Activated B cell treated with CpG ODN at 0.5 μM for 24 hours (primary cell): ENCODE measurements at regions of chr20 and their contacts with region 1.

Region 1: GRCh38 chr20:2873010-2873746 is at the start of gene PTPRA:
- DNase-seq: peak; percentile 90
- ATAC-seq: peak; percentile 94
- H3K4me3 Mint-ChIP-seq: peak within 1 kb of the TSS; percentile 94
- H3K27ac Mint-ChIP-seq: peak within 1 kb of the TSS; percentile 80
- H3K4me1 Mint-ChIP-seq: peaks cover 38% of the 10 kb centered on the region
- H3K27me3 Mint-ChIP-seq: peaks cover 4% of the 10 kb centered on the region
- CTCF ChIP-seq: no peak
- total RNA-seq, gene PTPRA: 43.6 and 46.7 TPM in 2 replicates

Region 2: DNA sequence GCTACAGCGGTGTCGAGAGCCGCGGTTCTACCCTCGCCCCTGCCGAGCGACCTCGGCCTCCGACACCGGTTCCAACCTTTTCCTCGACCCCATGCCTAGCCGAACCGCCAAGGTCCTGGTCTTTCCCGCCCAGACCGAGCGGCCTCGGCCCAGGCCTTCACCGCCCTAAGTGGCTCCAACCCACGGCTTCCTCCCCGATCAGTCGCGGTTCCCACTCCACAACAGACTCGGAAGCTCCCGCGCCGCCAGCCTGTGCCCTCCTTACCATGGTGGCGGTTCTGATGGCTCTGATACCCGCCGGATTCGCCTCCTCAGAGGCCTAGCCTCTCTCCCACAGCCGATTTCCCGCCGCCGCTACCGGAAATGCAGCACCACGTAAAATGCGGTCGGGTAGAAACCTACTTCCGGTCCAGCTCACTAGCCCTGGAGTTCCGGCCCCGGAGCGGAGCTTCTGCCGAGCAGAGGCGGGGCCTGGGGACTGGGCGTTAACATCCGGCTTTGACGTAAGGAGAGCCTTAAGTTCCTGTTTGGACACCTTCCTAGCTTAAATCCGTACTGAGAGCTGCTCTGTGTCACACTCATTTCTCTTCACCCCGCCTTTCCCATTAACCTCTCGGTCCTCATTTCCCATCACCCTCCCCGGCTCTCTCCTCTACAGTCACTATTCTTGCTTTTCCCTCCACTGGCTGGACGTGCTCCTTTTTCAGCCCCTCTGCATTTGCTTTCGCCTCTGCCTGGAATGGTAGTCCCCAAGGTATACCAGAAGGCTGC is 402.6 kb before region 1 on chr20 and contains the start of gene SNRPB:
- CTCF ChIA-PET with region 1: no interaction called
- POLR2A ChIA-PET with region 1: no interaction called
- intact Hi-C with region 1: loop called (anchors 1 kb)
- DNase-seq: peak; percentile 95
- ATAC-seq: peak; percentile 94
- H3K4me3 Mint-ChIP-seq: peak within 1 kb of the TSS; percentile 99
- H3K27ac Mint-ChIP-seq: peak within 1 kb of the TSS; percentile 97
- H3K4me1 Mint-ChIP-seq: peaks cover 50% of the 10 kb centered on the region
- H3K27me3 Mint-ChIP-seq: no peaks in the 10 kb centered on the region
- CTCF ChIP-seq: no peak
- total RNA-seq, gene SNRPB: 215 and 234 TPM in 2 replicates

Region 3: GRCh38 chr20:2688041-2688591 is 185.1 kb before region 1 on chr20:
- CTCF ChIA-PET with region 1: no interaction called
- POLR2A ChIA-PET with region 1: no interaction called
- intact Hi-C with region 1: loop called (anchors 5 kb)
- DNase-seq: no peak
- ATAC-seq: peak; percentile 16
- H3K4me3 Mint-ChIP-seq: no peak overlapping the region
- H3K27ac Mint-ChIP-seq: no peak overlapping the region
- H3K4me1 Mint-ChIP-seq: peaks cover 13% of the 10 kb centered on the region
- H3K27me3 Mint-ChIP-seq: peaks cover 46% of the 10 kb centered on the region
- CTCF ChIP-seq: no peak

Region 4: GRCh38 chr20:2888224-2888955 is 15.2 kb after region 1 on chr20:
- CTCF ChIA-PET with region 1: no interaction called
- POLR2A ChIA-PET with region 1: interaction called, 3 read pairs
- intact Hi-C with region 1: loop called (anchors 2 kb)
- DNase-seq: no peak
- ATAC-seq: no peak
- H3K4me3 Mint-ChIP-seq: no peak overlapping the region
- H3K27ac Mint-ChIP-seq: no peak overlapping the region
- H3K4me1 Mint-ChIP-seq: peaks cover 65% of the 10 kb centered on the region
- H3K27me3 Mint-ChIP-seq: no peaks in the 10 kb centered on the region
- CTCF ChIP-seq: no peak

Region 5: GRCh38 chr20:2967841-2968240 is 94.7 kb after region 1 on chr20:
- CTCF ChIA-PET with region 1: no interaction called
- POLR2A ChIA-PET with region 1: no interaction called
- intact Hi-C with region 1: no loop called
- DNase-seq: no peak
- ATAC-seq: no peak
- H3K4me3 Mint-ChIP-seq: no peak overlapping the region
- H3K27ac Mint-ChIP-seq: no peak overlapping the region
- H3K4me1 Mint-ChIP-seq: no peaks in the 10 kb centered on the region
- H3K27me3 Mint-ChIP-seq: no peaks in the 10 kb centered on the region
- CTCF ChIP-seq: no peak

Region 6: DNA sequence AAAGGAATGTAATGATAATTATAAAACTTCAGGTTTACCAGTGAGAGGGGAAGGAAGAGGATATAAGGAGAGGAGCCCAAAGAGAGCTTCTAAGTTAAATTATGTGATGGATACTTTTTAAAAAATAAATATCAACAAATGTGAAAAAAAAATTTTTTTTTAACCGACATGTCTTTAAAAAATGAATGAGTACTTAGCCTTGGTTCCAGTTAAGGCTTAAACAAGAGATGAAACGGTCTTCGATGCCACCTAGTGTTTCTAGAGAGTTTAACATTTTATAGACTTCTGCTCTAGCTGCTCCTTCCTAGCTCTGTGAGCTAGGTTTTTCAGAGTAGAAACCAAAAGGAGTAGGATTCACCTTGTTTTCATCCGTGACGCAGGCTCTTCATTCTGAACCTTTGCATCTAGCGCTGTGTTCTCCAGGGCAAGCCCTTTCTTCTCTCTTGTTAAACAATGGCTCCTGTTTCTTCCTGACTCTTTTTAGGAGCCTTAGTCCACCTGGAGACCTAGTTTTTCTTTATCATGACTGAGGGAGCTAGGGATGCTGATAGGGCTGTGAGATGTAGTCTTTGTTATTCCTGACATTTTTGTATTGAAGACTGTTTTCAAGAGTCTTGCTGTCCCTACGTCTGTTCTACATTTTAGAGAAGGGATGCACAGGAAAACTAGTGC is 127.8 kb after region 1 on chr20:
- CTCF ChIA-PET with region 1: interaction called, 3 read pairs
- POLR2A ChIA-PET with region 1: no interaction called
- intact Hi-C with region 1: loop called (anchors 5 kb)
- DNase-seq: no peak
- ATAC-seq: peak; percentile 66
- H3K4me3 Mint-ChIP-seq: no peak overlapping the region
- H3K27ac Mint-ChIP-seq: no peak overlapping the region
- H3K4me1 Mint-ChIP-seq: no peaks in the 10 kb centered on the region
- H3K27me3 Mint-ChIP-seq: no peaks in the 10 kb centered on the region
- CTCF ChIP-seq: no peak

Region 7: DNA sequence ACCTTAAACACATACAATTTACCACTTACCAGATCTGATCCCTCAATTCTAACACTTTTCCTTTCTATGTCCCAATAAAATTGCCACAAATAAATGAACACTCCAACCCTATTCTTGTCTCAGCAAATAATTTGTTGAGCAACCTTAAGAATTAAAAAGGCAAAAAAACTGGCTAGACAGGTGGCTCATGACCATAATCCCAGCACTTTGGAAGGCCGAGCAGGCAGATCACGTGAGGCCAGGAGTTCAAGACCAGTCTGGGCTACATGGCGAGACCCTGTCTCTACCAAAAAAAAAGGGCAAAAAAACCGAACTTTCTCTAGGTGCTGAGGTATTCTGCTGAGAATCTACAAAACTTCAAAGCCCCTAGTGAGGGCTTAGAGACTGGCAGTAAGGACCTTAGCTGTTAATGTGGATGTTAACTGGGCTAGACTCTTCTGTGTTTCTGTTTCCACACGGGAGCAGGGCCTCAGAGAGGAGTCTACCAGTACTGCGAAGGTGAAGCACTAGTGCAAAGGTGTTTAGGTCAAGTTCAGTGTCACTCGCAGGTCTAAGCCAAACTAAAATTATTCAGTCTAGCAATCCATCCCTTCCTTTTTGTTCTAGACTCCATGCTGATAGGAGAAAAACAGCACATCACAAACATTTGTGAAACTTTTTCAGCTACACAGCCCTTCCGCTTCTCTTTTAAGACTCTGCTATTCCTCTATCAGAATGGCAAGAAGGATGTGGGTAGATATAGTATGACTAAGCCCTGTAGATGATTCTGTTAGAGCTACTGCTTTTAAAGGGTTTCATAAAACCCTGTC is 283.8 kb after region 1 on chr20:
- CTCF ChIA-PET with region 1: no interaction called
- POLR2A ChIA-PET with region 1: no interaction called
- intact Hi-C with region 1: loop called (anchors 10 kb)
- DNase-seq: no peak
- ATAC-seq: peak; percentile 73
- H3K4me3 Mint-ChIP-seq: peak overlapping the region; percentile 70
- H3K27ac Mint-ChIP-seq: peak overlapping the region; percentile 80
- H3K4me1 Mint-ChIP-seq: peaks cover 62% of the 10 kb centered on the region
- H3K27me3 Mint-ChIP-seq: no peaks in the 10 kb centered on the region
- CTCF ChIP-seq: no peak